Endothelial cell of umbilical vein (primary cell): ENCODE measurements at regions of chr2 and their contacts with region 1.

Region 1: DNA sequence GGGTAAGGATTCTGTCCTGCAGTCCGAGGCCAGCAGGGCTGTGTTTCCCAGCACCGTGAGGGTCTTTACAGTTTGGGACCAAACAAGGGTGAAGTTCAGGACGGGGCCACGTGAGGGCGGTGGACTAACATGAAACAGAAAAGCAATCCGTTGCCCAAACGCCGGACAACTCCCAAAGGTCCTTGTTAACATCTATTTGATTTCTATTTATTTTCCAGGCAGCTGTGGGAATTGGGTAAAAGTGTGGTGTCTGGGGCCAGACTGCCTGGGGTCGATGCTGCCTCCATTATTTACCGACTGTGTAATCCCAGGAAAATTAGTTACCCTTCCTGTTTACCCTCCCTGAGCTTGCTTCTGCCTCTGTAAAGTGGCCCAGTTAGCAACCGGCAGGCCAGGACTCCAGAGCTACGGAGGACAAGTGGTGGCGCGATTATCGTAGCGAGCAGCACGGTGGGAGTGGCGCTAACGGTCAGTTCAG is 66.3 kb upstream of the TCF7L1 start:
- DNase-seq: peak; percentile 83
- H3K4me3 ChIP-seq: peak overlapping the region in 1 of 3 experiments; percentile 24
- H3K27ac ChIP-seq: no peak overlapping the region
- H3K4me1 ChIP-seq: no peaks in the 10 kb centered on the region
- H3K27me3 ChIP-seq: peaks cover 4 to 7% of the 10 kb centered on the region in 2 experiments
- CTCF ChIP-seq: peak; percentile 76 to 80
- POLR2A ChIP-seq: no peak

Region 2: GRCh38 chr2:85053802-85054201 is 13.1 kb before region 1 on chr2:
- CTCF ChIA-PET with region 1: interaction called, 10 read pairs
- POLR2A ChIA-PET with region 1: no interaction called
- dilution Hi-C with region 1: no loop called
- intact Hi-C with region 1: no loop called
- DNase-seq: no peak
- H3K4me3 ChIP-seq: no peak overlapping the region
- H3K27ac ChIP-seq: no peak overlapping the region
- H3K4me1 ChIP-seq: no peaks in the 10 kb centered on the region
- H3K27me3 ChIP-seq: no peaks in the 10 kb centered on the region
- CTCF ChIP-seq: no peak
- POLR2A ChIP-seq: no peak

Region 3: DNA sequence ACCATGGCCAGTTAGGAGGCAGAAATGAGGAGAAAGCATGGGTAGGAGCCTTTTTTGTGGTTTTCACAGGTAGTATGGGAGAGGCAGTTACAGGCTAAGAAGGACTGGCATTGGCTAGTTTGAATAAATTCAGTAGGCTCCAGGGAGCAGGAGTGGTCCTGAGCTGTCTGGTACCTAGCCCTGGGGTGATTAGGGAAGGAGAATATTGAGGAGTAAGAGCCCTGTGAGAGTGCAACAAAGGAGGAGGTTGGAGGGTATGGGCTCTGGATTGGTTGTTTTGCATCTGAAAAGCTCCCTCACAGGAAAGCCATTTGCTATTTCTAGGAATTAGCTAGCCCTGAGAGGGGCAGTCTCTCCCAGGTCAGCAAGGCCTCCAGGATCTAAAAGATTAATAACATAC is 53.0 kb after region 1 on chr2:
- CTCF ChIA-PET with region 1: interaction called, 11 read pairs
- POLR2A ChIA-PET with region 1: no interaction called
- dilution Hi-C with region 1: no loop called
- intact Hi-C with region 1: no loop called
- DNase-seq: no peak
- H3K4me3 ChIP-seq: no peak overlapping the region
- H3K27ac ChIP-seq: no peak overlapping the region
- H3K4me1 ChIP-seq: no peaks in the 10 kb centered on the region
- H3K27me3 ChIP-seq: peaks cover 3 to 20% of the 10 kb centered on the region in 2 experiments
- CTCF ChIP-seq: no peak
- POLR2A ChIP-seq: no peak

Region 4: DNA sequence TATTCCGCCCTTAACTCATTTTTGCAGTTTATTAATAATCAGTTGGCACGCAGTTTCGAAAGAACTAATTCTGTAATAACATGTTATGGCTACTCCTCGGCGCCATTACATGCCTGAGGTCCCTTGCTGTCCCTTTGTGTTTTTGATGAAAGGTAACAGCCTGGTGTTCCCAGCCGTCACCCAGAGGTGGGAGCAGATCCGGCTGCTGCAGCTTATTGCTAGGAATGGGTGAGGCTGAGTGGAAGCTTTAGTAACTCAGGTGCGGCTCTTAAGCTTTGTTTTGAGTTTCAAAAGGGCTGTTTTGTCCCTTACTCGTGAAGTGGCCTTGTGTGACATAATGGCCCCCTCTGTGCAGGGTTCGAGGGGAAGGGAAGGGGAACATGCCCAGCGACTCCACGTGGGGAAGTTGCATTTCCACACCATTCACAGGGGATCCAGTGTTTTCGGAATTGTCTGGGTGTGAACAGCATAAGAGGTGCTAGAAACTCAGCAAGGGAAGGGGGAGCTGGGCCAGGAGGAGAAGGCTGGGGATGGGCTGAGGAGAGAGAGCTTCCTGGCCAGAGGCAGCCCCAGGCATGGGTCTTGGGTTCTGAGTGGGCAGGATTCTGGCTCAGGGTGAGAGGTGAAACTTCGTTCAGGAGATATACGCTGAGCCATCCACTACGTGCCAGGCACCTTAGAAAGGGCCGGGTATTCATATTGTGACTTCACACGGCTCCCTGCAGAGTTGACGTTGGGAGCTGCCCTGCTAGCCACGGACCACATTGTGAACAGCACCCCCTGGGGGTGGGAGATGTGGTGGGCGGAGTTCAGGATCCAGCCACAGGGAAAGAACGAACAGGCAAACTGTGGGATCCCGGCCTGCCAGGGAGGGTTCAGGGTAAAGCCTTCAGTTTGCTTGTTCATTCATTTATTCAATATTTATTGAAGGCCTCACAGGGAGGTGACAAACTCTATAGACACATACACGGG is 176.5 kb after region 1 on chr2:
- CTCF ChIA-PET with region 1: interaction called, 10 read pairs
- POLR2A ChIA-PET with region 1: no interaction called
- dilution Hi-C with region 1: no loop called
- intact Hi-C with region 1: loop called (anchors 1 kb)
- DNase-seq: peak; percentile 30
- H3K4me3 ChIP-seq: no peak overlapping the region
- H3K27ac ChIP-seq: no peak overlapping the region
- H3K4me1 ChIP-seq: peaks cover 15% of the 10 kb centered on the region
- H3K27me3 ChIP-seq: no peaks in the 10 kb centered on the region
- CTCF ChIP-seq: peak; percentile 55 to 70
- POLR2A ChIP-seq: no peak

Region 5: DNA sequence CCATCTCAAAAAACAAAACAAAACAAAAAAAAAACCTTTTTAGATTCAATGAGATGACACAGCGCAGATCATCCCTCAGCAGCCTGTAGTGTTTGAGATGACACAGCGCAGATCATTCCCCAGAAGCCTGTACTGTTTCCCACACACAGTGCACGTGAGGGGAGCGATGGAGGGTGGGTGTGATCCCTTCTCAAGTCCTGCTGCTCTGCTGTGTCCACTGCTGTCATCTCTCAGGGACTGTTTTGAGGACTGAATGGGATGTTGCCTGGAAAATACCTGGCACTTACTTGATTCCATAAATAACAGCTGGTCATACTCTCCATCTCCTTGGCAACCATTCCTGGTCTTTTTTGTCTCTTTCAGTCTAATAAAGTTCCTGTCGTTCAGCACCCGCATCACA is 235.2 kb after region 1 on chr2:
- CTCF ChIA-PET with region 1: interaction called, 371 read pairs
- POLR2A ChIA-PET with region 1: interaction called, 7 read pairs
- dilution Hi-C with region 1: no loop called
- intact Hi-C with region 1: loop called (anchors 1 kb)
- DNase-seq: no peak
- H3K4me3 ChIP-seq: no peak overlapping the region
- H3K27ac ChIP-seq: no peak overlapping the region
- H3K4me1 ChIP-seq: no peaks in the 10 kb centered on the region
- H3K27me3 ChIP-seq: no peaks in the 10 kb centered on the region
- CTCF ChIP-seq: no peak
- POLR2A ChIP-seq: no peak

Region 6: DNA sequence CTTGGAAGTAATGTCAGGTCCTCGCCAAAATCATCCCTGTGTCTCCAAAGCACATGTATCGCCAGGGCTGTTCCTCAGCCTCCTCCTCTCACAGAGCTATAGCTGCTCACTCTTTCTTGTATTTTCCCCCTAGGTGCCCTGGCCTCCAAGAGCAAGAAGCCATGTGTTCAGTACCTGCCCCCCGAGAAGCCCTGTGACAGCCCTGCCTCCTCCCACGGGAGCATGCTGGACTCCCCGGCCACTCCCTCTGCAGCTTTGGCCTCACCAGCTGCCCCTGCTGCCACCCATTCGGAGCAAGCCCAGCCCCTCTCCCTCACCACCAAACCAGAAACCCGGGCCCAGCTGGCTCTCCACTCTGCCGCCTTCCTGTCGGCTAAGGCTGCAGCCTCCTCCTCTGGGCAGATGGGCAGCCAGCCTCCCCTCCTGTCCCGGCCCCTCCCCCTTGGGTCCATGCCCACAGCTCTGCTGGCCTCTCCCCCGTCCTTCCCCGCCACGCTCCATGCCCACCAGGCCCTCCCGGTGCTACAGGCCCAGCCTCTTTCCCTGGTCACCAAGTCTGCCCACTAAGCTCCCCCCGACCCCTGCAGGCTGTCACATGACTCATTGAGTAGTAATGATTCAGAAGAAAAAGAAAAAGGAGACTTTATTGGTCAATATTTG is 242.1 kb after region 1 on chr2:
- CTCF ChIA-PET with region 1: interaction called, 10 read pairs
- POLR2A ChIA-PET with region 1: no interaction called
- dilution Hi-C with region 1: no loop called
- intact Hi-C with region 1: no loop called
- DNase-seq: peak; percentile 58
- H3K4me3 ChIP-seq: no peak overlapping the region
- H3K27ac ChIP-seq: no peak overlapping the region
- H3K4me1 ChIP-seq: peaks cover 9% of the 10 kb centered on the region
- H3K27me3 ChIP-seq: no peaks in the 10 kb centered on the region
- CTCF ChIP-seq: no peak
- POLR2A ChIP-seq: no peak